ENCODE measurements at regions of chr13 and their contacts with region 1.

Region 1: DNA sequence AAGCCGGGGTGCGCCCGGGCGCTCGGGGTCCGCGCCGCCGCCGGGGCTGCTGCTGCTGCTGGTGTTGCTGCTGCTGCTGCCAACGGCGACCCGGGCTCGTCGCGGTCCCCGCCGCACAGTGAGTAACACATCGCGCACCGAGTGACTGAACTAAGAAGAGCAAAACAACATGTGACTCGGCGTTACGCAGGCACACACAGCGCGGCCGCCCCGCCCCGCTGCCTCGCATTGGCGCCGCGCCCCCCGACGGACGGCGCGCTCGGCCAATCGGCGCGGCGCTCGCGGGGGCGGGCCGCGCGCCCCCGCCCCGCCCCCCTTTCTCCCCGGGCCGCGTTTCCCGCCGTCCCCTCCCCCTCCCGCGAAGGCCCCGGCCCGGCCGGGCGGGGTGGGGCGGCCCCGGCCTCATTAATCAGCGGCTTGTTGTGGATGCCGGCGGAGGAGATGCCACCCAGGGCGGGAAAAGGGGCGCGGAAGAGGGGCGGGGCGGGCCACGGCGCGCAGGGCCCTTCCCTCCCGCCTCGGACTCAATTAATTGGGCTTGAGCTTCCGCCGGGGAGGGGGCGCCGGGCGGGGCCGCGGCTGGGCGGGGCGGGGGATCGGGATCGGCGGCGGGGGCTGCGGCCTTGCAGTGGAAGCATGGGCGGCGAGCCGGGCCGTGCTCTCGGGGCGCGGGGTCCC is at the start of gene IRS2:
- DNase-seq: peak; percentile 93 to 97 (median 96)
- H3K4me3 ChIP-seq: peak within 1 kb of the TSS; percentile 36 to 62
- H3K4me3 Mint-ChIP-seq: peak within 1 kb of the TSS; percentile 81 to 88 (median 86)
- H3K27ac ChIP-seq: peak within 1 kb of the TSS; percentile 37
- H3K27ac Mint-ChIP-seq: peak within 1 kb of the TSS; percentile 72 to 97 (median 89)
- H3K4me1 ChIP-seq: peaks cover 21% of the 10 kb centered on the region
- H3K4me1 Mint-ChIP-seq: peaks cover 11 to 29% (median 19%) of the 10 kb centered on the region in 4 donors
- H3K27me3 ChIP-seq: no peaks in the 10 kb centered on the region
- H3K27me3 Mint-ChIP-seq: peaks cover 3% of the 10 kb centered on the region in 2 donors
- total RNA-seq, gene IRS2: 20.9 to 21.4 TPM

Region 2: GRCh38 chr13:108086678-108087077 is 1699.9 kb before region 1 on chr13:
- CTCF ChIA-PET with region 1: no interaction called
- POLR2A ChIA-PET with region 1: no interaction called
- intact Hi-C with region 1: no loop called
- DNase-seq: no peak
- H3K4me3 ChIP-seq: no peak overlapping the region
- H3K4me3 Mint-ChIP-seq: no peak overlapping the region
- H3K27ac ChIP-seq: no peak overlapping the region
- H3K27ac Mint-ChIP-seq: no peak overlapping the region
- H3K4me1 ChIP-seq: no peaks in the 10 kb centered on the region
- H3K4me1 Mint-ChIP-seq: no peaks in the 10 kb centered on the region
- H3K27me3 ChIP-seq: no peaks in the 10 kb centered on the region
- H3K27me3 Mint-ChIP-seq: no peaks in the 10 kb centered on the region

Region 3: DNA sequence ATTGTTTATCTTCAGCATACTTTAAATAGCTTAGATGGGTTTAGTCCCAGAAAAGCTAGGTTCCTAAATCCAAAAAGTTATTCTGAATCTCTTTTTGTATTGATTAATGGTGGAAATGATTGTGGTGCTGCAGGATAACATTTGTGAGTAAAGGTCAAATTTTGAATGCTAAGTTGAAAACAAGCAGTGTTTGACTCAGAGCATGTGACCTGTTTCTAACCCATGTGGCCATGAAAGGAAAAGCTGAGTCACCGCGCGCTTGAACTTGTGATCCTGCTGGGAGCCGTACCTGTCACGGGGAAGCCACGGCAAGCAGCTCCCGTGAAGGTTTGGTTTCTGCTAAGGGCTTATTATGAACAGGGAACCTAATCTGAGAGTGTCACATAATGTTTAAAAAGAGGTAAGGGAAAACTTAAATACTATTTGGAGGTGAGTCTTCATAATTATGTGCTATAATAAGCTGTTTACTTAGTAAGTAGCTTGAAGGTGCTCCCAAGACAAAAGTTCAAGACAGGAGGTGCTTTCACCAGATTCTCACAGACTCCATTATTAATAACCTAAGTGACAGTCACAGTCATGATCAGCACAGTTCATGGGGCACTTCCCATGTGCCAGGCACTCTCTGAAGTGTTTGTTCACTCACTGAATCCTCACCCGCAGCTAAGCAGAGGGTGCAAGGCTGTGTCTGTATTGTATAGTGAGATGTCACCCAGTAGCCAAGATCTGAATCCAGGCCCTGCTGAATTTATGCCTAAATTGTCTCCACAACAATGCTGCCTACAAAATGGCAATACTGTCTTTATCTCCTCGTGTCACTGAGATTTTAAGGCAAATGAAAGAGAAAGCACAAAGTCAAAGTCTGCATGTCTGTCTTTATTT is 870.7 kb before region 1 on chr13:
- CTCF ChIA-PET with region 1: no interaction called
- POLR2A ChIA-PET with region 1: interaction called, 3 read pairs
- intact Hi-C with region 1: loop called (anchors 2 kb)
- DNase-seq: peak; percentile 19 to 84 (median 30)
- H3K4me3 ChIP-seq: no peak overlapping the region
- H3K4me3 Mint-ChIP-seq: peak overlapping the region in 7 of 8 donors; percentile 69 to 86 (median 78)
- H3K27ac ChIP-seq: no peak overlapping the region
- H3K27ac Mint-ChIP-seq: peak overlapping the region in 6 of 7 donors; percentile 32 to 81 (median 71)
- H3K4me1 ChIP-seq: peaks cover 16% of the 10 kb centered on the region
- H3K4me1 Mint-ChIP-seq: peaks cover 10 to 17% (median 13%) of the 10 kb centered on the region in 4 donors
- H3K27me3 ChIP-seq: no peaks in the 10 kb centered on the region
- H3K27me3 Mint-ChIP-seq: no peaks in the 10 kb centered on the region

Region 4: GRCh38 chr13:109145631-109146030 is 641.0 kb before region 1 on chr13:
- CTCF ChIA-PET with region 1: no interaction called
- POLR2A ChIA-PET with region 1: no interaction called
- intact Hi-C with region 1: loop called (anchors 1 kb)
- DNase-seq: peak in 3 of 5 donors; percentile 1 to 4 (median 3)
- H3K4me3 ChIP-seq: no peak overlapping the region
- H3K4me3 Mint-ChIP-seq: no peak overlapping the region
- H3K27ac ChIP-seq: no peak overlapping the region
- H3K27ac Mint-ChIP-seq: no peak overlapping the region
- H3K4me1 ChIP-seq: no peaks in the 10 kb centered on the region
- H3K4me1 Mint-ChIP-seq: no peaks in the 10 kb centered on the region
- H3K27me3 ChIP-seq: no peaks in the 10 kb centered on the region
- H3K27me3 Mint-ChIP-seq: peaks cover 10 to 16% of the 10 kb centered on the region in 2 donors

Region 5: DNA sequence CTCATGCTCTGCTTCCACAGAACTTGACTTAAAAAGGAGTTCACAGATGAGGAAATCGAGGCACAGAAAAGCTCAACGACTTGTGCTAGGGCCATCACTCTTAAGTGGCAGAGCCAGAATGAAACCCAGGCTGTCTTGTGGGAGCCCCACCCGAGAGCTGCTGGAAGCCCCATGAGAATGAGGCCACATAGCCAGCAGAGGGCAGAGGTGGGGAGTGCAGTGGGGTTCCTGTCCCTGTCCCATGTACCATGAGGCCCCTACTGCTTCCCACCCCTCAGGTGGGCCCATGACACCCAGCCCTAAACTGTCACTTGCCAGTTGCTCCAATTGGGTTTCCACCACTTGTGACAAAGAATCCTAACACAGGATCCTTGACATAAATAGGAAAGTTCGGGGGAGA is 176.1 kb before region 1 on chr13:
- CTCF ChIA-PET with region 1: interaction called, 17 read pairs
- POLR2A ChIA-PET with region 1: no interaction called
- intact Hi-C with region 1: loop called (anchors 1 kb)
- DNase-seq: peak in 4 of 5 donors; percentile 22 to 33 (median 28)
- H3K4me3 ChIP-seq: no peak overlapping the region
- H3K4me3 Mint-ChIP-seq: no peak overlapping the region
- H3K27ac ChIP-seq: no peak overlapping the region
- H3K27ac Mint-ChIP-seq: no peak overlapping the region
- H3K4me1 ChIP-seq: no peaks in the 10 kb centered on the region
- H3K4me1 Mint-ChIP-seq: no peaks in the 10 kb centered on the region
- H3K27me3 ChIP-seq: no peaks in the 10 kb centered on the region
- H3K27me3 Mint-ChIP-seq: peaks cover 1 to 2% of the 10 kb centered on the region in 2 donors

Region 6: GRCh38 chr13:110915057-110915873 is 1128.7 kb after region 1 on chr13 and contains the start of gene ANKRD10:
- CTCF ChIA-PET with region 1: no interaction called
- POLR2A ChIA-PET with region 1: no interaction called
- intact Hi-C with region 1: loop called (anchors 5 kb)
- DNase-seq: peak; percentile 90 to 94 (median 91)
- H3K4me3 ChIP-seq: peak within 1 kb of the TSS; percentile 26 to 89
- H3K4me3 Mint-ChIP-seq: peak within 1 kb of the TSS; percentile 89 to 95 (median 92)
- H3K27ac ChIP-seq: peak within 1 kb of the TSS; percentile 77
- H3K27ac Mint-ChIP-seq: peak within 1 kb of the TSS; percentile 90 to 96 (median 95)
- H3K4me1 ChIP-seq: peaks cover 39% of the 10 kb centered on the region
- H3K4me1 Mint-ChIP-seq: peaks cover 20 to 52% (median 37%) of the 10 kb centered on the region in 4 donors
- H3K27me3 ChIP-seq: no peaks in the 10 kb centered on the region
- H3K27me3 Mint-ChIP-seq: no peaks in the 10 kb centered on the region
- total RNA-seq, gene ANKRD10: 127 to 140 TPM

Measured in CD4-positive, alpha-beta memory T cell (primary cell).